ENCODE measurements at regions of chr1 and their contacts with region 1.

Region 1: DNA sequence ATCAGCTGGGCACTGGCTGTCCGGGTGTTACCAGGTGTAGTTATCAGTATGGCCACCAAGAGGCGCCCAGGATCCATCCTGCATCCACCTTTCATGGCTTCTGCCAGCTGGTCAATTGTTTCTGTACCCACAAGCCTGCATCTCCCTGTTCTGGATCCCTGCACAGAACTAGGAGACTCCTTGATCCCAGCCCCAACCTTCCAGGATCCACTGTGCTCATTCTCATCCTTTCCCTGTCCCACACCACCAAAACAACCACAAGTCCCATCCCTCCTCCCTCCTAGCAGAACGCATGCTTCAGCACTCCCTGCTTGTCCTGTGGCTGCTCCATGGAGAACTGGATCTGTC is 27.2 kb upstream of the FOXE3 start:
- H3K4me3 Mint-ChIP-seq: no peak overlapping the region
- H3K27ac Mint-ChIP-seq: no peak overlapping the region
- H3K4me1 Mint-ChIP-seq: peaks cover 8% of the 10 kb centered on the region
- H3K27me3 Mint-ChIP-seq: peaks cover 46% of the 10 kb centered on the region

Region 2: GRCh38 chr1:47399138-47399845 is 10.4 kb after region 1 on chr1:
- intact Hi-C with region 1: no loop called
- H3K4me3 Mint-ChIP-seq: no peak overlapping the region
- H3K27ac Mint-ChIP-seq: no peak overlapping the region
- H3K4me1 Mint-ChIP-seq: peaks cover 18% of the 10 kb centered on the region
- H3K27me3 Mint-ChIP-seq: peaks cover 46% of the 10 kb centered on the region

Region 3: DNA sequence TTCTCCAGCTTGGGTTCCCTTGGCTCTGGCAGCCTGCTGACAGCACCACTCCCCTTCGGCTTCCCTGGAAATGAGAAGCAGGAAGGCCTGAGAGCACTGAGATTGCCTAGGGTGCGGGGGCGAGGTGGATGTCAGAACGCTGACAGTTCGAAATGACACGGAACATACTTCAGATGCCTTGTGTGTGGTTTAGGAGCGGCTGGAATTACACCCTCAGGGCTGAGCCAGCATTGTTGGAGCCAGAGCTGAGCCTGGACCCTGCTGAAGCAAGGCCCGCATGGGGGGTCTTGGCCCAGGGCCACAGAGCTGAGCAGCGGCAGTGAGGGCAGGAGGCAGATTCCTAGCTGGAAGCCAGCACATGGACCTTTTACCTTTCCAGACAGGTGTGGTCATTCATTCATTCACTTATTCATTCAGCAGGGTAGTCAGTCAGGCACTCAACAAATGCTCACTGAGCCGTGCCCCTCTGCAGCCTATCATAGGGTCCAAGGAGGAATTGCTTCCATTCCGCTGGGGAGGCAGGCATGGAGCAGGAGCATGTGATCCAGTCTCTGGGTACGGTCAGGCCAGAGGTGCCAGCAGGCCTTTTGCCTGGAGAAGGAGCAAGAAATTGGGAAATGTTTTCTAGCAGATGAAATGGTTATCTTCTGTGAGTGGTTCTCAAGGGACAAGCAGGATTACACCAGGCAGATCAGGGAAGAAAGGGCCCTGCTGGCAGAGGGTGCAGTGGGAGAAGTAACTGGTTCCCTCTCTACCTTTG is 20.6 kb after region 1 on chr1:
- intact Hi-C with region 1: loop called (anchors 2 kb)
- H3K4me3 Mint-ChIP-seq: peak overlapping the region; percentile 47
- H3K27ac Mint-ChIP-seq: peak overlapping the region; percentile 85
- H3K4me1 Mint-ChIP-seq: peaks cover 73% of the 10 kb centered on the region
- H3K27me3 Mint-ChIP-seq: peaks cover 25% of the 10 kb centered on the region

Region 4: DNA sequence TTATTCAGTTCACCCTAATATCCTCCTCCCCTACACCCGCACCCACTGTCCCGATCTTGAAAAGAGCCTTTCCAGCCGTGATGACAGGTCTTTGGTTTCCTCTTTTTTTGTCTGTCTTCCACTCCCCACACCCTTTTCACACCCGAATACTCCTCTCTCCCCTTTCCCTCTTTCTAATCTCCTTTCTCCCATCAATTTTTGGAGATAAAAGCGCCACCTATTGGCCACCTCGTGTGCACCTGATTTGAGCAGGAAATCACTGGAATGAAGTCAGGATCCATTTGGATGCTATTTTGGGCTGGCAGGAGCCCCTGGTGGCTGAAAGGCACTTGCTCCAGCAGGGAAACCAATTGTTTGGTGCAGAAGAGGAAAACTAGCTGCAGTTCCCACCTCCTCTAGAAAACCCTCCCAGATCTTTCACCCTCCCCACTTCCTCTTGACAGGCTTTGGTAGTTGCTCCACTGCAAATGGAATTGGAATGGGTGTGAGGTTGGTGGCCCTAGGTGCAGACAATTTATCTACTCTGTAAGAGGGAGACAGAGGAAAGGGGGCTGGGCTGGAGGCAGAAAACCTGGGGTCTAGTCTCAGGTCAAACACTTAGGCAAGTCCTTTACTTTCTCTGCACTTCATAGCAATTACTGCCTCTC is 35.6 kb after region 1 on chr1:
- intact Hi-C with region 1: loop called (anchors 1 kb)
- H3K4me3 Mint-ChIP-seq: no peak overlapping the region
- H3K27ac Mint-ChIP-seq: no peak overlapping the region
- H3K4me1 Mint-ChIP-seq: peaks cover 27% of the 10 kb centered on the region
- H3K27me3 Mint-ChIP-seq: peaks cover 50% of the 10 kb centered on the region

Region 5: GRCh38 chr1:47437447-47438164 is 48.7 kb after region 1 on chr1 and contains the start of gene FOXD2:
- intact Hi-C with region 1: loop called (anchors 5 kb)
- H3K4me3 Mint-ChIP-seq: peak within 1 kb of the TSS; percentile 95
- H3K27ac Mint-ChIP-seq: peak within 1 kb of the TSS; percentile 89
- H3K4me1 Mint-ChIP-seq: peaks cover 42% of the 10 kb centered on the region
- H3K27me3 Mint-ChIP-seq: peaks cover 44% of the 10 kb centered on the region

Region 6: GRCh38 chr1:47593013-47593568 is 204.2 kb after region 1 on chr1:
- intact Hi-C with region 1: no loop called
- H3K4me3 Mint-ChIP-seq: no peak overlapping the region
- H3K27ac Mint-ChIP-seq: no peak overlapping the region
- H3K4me1 Mint-ChIP-seq: no peaks in the 10 kb centered on the region
- H3K27me3 Mint-ChIP-seq: peaks cover 24% of the 10 kb centered on the region

Region 7: GRCh38 chr1:47710329-47711071 is 321.6 kb after region 1 on chr1:
- intact Hi-C with region 1: loop called (anchors 1 kb)
- H3K4me3 Mint-ChIP-seq: no peak overlapping the region
- H3K27ac Mint-ChIP-seq: no peak overlapping the region
- H3K4me1 Mint-ChIP-seq: peaks cover 26% of the 10 kb centered on the region
- H3K27me3 Mint-ChIP-seq: peaks cover 88% of the 10 kb centered on the region

Region 8: GRCh38 chr1:47725992-47726855 is 337.4 kb after region 1 on chr1:
- intact Hi-C with region 1: loop called (anchors 1 kb)
- H3K4me3 Mint-ChIP-seq: peak overlapping the region; percentile 30
- H3K27ac Mint-ChIP-seq: no peak overlapping the region
- H3K4me1 Mint-ChIP-seq: peaks cover 7% of the 10 kb centered on the region
- H3K27me3 Mint-ChIP-seq: peaks cover 58% of the 10 kb centered on the region